Gastrocnemius medialis (tissue), 4 donors: ENCODE measurements at regions of chr4 and their contacts with region 1.

Region 1: DNA sequence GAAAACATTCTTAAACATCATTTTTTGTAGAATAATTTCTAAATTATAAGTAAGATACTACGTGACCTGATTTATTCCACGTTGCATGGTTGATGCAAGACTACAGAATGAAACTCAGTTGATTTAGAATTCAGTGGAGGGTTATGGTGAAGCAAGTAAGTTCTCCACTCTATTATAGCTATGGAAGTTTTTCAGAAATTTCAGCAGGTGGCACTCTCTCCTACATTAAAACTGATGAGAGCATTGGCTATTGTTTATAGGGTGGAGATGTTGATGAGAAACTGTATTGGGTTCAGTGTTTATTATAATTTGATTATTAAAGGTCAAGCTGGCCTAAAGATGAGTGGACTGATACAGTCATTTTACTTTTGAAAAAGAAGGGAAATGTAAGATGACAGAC is 88.0 kb downstream of the FNIP2 start:
- DNase-seq: no peak
- ATAC-seq: peak; percentile 65 to 73
- H3K4me3 ChIP-seq: no peak overlapping the region
- H3K27ac ChIP-seq: no peak overlapping the region
- H3K4me1 ChIP-seq: no peaks in the 10 kb centered on the region
- H3K27me3 ChIP-seq: no peaks in the 10 kb centered on the region
- CTCF ChIP-seq: peak in 4 of 5 experiments; percentile 26 to 51 (median 36)
- POLR2A ChIP-seq: no peak

Region 2: GRCh38 chr4:159201168-159201567 is 344.3 kb after region 1 on chr4:
- in situ Hi-C with region 1: loop called (anchors 5 to 10 kb)
- intact Hi-C with region 1: loop called (anchors 2 kb)
- DNase-seq: no peak
- ATAC-seq: peak; percentile 28 to 36
- H3K4me3 ChIP-seq: no peak overlapping the region
- H3K27ac ChIP-seq: peak overlapping the region; percentile 55 to 72 (median 58)
- H3K4me1 ChIP-seq: peaks cover 42 to 49% of the 10 kb centered on the region in 2 donors
- H3K27me3 ChIP-seq: no peaks in the 10 kb centered on the region
- CTCF ChIP-seq: no peak
- POLR2A ChIP-seq: no peak

Region 3: GRCh38 chr4:159206427-159206871 is 349.6 kb after region 1 on chr4:
- in situ Hi-C with region 1: loop called (anchors 5 to 10 kb)
- intact Hi-C with region 1: loop called (anchors 2 kb)
- DNase-seq: no peak
- ATAC-seq: no peak
- H3K4me3 ChIP-seq: no peak overlapping the region
- H3K27ac ChIP-seq: peak overlapping the region in 1 of 4 donors; percentile 19
- H3K4me1 ChIP-seq: peaks cover 15 to 46% of the 10 kb centered on the region in 2 donors
- H3K27me3 ChIP-seq: no peaks in the 10 kb centered on the region
- CTCF ChIP-seq: no peak
- POLR2A ChIP-seq: no peak

Region 4: DNA sequence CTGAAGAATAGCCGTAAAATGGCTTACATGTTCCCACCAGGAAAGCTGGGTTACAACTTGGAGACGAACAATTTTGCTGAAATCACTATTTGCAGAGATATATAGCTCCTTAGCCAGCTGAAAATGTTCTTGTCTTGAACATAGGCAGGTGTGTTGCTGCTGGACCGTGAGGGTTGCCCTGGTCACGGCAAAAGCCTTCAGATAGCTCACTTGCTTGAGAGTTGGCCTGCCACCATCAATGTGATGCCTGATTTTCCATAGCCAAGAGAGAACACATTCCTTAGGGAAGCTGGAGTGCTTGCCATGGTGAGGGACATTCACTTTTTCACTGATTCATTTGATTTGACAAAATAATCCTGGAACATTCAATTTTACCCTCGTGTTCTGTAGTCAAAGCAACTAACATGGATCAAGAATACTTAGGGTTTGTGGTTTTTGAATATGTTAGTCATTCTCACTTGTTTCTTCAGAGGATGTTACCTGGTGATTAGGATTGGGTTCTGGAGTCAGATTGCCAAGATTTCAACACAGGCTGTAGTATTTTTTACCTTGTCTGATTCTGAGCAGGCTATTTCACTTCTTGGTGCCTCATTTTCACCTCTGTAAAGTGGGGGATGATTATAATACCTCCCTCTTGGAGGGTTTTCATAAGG is 782.9 kb after region 1 on chr4:
- in situ Hi-C with region 1: no loop called
- intact Hi-C with region 1: no loop called
- DNase-seq: no peak
- ATAC-seq: no peak
- H3K4me3 ChIP-seq: no peak overlapping the region
- H3K27ac ChIP-seq: no peak overlapping the region
- H3K4me1 ChIP-seq: no peaks in the 10 kb centered on the region
- H3K27me3 ChIP-seq: no peaks in the 10 kb centered on the region
- CTCF ChIP-seq: no peak
- POLR2A ChIP-seq: no peak